Activated T-helper 1 cell treated with anti-CD3 and anti-CD28 coated beads, Interleukin-12 subunit alpha, Interleukin-12 subunit beta, Interleukin-2, Interleukin-4 antibody, amounts not matched to agents 30 ng/mL and 10 ng/mL and 1 ng/mL, durations not matched to agents 14 hours and 24 hours and 36 hours (primary cell): ENCODE measurements at regions of chr3 and their contacts with region 1.

Region 1: DNA sequence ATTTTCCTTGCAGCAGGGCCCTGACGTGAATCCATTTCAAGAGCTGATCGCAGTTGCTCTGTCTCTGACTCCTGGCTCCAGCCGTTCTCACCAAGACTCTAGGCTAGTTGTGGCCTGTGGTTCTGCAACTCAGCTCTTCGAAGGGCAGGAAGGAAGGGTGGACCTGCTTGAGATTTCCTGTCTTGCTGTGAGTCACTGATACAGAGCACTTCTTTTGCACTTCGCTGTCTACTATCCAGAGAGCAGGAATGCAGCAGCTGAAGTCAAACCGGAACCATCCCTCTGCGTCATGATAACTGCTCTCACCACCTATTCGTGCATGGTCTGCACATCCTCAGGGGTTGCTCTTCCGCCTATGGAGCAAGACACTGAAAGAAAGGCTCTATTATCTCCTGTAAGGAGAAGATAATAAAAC is 59.7 kb downstream of the RAP2B start:
- DNase-seq: peak; percentile 75
- H3K4me3 Mint-ChIP-seq: peak overlapping the region; percentile 72
- H3K27ac Mint-ChIP-seq: peak overlapping the region; percentile 90
- H3K4me1 Mint-ChIP-seq: peaks cover 47% of the 10 kb centered on the region
- H3K27me3 Mint-ChIP-seq: no peaks in the 10 kb centered on the region

Region 2: GRCh38 chr3:153284282-153284938 is 62.7 kb after region 1 on chr3:
- intact Hi-C with region 1: loop called (anchors 5 kb)
- DNase-seq: no peak
- H3K4me3 Mint-ChIP-seq: no peak overlapping the region
- H3K27ac Mint-ChIP-seq: peak overlapping the region; percentile 36
- H3K4me1 Mint-ChIP-seq: peaks cover 40% of the 10 kb centered on the region
- H3K27me3 Mint-ChIP-seq: no peaks in the 10 kb centered on the region